Right ventricle myocardium inferior (tissue), 1 donor: ENCODE measurements at regions of chr11 and their contacts with region 1.

Region 1: GRCh38 chr11:33542921-33543320 is 157.7 kb downstream of the C11orf91 start:
- DNase-seq: no peak
- ATAC-seq: no peak

Region 2: DNA sequence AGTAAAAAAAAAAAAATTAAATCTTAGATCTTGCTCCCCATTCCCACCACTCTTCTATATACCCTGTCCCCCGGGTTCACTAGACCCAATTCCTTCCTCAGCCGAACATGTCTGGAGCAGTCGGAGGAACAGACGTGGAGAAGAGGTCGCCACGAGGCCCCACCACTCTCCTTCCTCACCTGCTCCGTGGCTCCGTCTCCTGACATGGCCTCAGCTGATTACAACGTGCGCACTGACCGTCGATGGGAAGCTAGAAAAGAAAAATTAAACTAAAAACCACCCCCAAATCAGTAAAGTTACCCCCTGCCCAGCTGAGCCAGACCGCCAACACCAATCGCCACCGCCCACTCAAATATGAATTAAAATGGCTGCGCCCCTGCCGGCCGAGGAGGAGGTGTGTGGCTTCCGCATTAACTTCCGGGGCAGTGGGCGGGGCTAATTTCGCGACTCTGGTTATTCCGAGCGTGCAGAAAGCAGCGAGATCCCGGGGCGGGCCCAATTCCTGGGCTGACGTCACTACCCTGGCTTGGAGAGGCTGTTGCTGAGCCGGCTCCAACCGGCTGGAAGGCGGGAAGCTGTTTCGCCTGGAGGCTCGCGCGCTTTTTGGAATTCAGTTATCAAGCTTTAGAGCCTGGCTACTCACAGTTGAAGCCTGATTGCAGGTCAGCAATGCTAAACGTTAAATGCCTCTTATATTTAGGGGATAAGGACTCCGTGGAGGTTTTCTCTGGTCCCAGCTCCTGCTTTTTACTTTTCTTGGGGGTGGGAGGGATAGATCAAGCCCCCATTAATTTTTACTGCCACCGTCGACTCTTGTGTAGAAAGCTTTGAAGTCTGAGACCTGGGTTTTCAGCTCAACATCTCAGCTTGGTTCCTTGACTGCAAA is 381.6 kb before region 1 on chr11 and contains the start of gene CSTF3:
- intact Hi-C with region 1: loop called (anchors 10 kb)
- DNase-seq: peak; percentile 100
- ATAC-seq: peak; percentile 99
- total RNA-seq, gene CSTF3: 12.6 TPM

Region 3: GRCh38 chr11:33687733-33688479 is 145.0 kb after region 1 on chr11:
- intact Hi-C with region 1: loop called (anchors 1 kb)
- DNase-seq: no peak
- ATAC-seq: no peak

Region 4: DNA sequence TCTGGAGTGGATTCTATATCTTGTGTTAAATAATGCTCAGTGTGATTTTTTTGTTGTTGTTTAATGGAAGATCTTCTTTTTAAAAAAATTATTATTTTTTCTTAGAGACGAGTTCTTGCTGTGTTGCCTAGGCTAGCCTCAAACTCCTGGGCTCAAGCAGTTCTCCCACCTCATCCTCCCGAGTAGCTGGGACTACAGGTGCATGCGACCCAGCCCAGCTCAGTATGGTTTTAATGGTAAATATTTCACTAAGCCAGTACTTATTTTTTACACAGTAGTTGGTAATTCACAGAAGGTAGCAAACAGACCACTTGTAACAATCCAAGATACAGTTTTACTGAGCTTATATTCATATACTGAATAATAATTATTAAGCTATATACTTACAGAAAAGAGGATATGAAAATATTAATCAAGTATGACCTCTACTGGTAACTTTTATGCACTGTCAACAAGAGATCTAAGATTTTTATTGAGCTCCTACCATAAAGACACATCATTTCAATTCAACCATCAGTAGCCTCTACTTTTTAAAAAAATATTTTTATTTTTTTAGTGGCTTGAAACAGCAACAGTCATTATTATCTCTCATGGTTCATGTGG is 199.4 kb after region 1 on chr11:
- intact Hi-C with region 1: loop called (anchors 5 kb)
- DNase-seq: no peak
- ATAC-seq: peak; percentile 27

Region 5: DNA sequence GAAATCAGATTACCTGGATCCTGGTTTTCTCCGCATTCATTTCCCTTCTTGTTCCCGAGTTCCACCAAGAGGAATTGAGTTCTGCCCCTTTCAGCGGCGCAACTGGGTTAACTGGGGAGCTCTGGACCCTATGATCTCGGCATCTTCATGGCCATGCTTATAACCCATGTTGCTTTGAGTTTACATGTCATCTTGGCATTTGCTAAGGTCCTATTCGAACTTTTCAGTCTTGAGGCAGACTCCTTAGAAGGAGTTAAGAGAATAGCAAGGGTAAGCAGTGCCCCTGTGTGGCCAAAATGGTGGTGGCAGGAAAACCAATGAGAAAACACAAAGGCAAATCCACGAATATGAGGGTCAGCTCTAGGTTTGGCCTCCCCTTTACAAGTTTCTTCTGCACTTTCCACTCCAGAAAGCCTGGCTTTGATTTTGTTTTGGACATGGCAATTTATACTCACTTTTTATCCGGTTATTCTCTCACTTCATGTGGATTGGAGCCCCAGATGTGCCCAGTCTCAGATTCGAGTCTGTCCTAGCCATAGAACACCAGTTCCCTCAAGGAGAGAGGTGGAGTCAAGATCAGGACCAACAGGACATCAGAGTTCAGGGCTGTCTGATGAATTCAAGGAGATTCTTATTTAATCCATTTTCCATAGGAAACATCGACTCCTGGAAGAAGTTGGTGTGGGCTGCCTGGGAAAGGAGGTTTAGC is 286.7 kb after region 1 on chr11:
- intact Hi-C with region 1: loop called (anchors 5 kb)
- DNase-seq: no peak
- ATAC-seq: peak; percentile 79